CD14-positive monocyte (primary cell): ENCODE measurements at regions of chr1 and their contacts with region 1.

Region 1: GRCh38 chr1:200367841-200368534 is 41.8 kb downstream of the ZNF281 start:
- DNase-seq: peak; percentile 71 to 87 (median 83)
- H3K4me3 ChIP-seq: peak overlapping the region in 1 of 3 experiments; percentile 37
- H3K4me3 Mint-ChIP-seq: peak overlapping the region; percentile 2 to 77
- H3K27ac ChIP-seq: peak overlapping the region; percentile 35 to 71
- H3K27ac Mint-ChIP-seq: peak overlapping the region; percentile 16 to 91 (median 87)
- H3K4me1 ChIP-seq: peaks cover 51 to 61% of the 10 kb centered on the region in 2 donors
- H3K4me1 Mint-ChIP-seq: peaks cover 58% of the 10 kb centered on the region
- H3K27me3 ChIP-seq: no peaks in the 10 kb centered on the region
- H3K27me3 Mint-ChIP-seq: no peaks in the 10 kb centered on the region
- CTCF ChIP-seq: no peak

Region 2: GRCh38 chr1:200351826-200352549 is 16.0 kb before region 1 on chr1:
- intact Hi-C with region 1: loop called in 1 of 2 experiments (anchors 1 kb)
- DNase-seq: peak; percentile 68 to 93 (median 86)
- H3K4me3 ChIP-seq: peak overlapping the region in 2 of 3 experiments; percentile 16 to 54
- H3K4me3 Mint-ChIP-seq: peak overlapping the region; percentile 51 to 79
- H3K27ac ChIP-seq: peak overlapping the region; percentile 13 to 80
- H3K27ac Mint-ChIP-seq: peak overlapping the region; percentile 87 to 98 (median 95)
- H3K4me1 ChIP-seq: peaks cover 56 to 58% of the 10 kb centered on the region in 2 donors
- H3K4me1 Mint-ChIP-seq: peaks cover 56% of the 10 kb centered on the region
- H3K27me3 ChIP-seq: no peaks in the 10 kb centered on the region
- H3K27me3 Mint-ChIP-seq: no peaks in the 10 kb centered on the region
- CTCF ChIP-seq: no peak